PC-3 (cell line): ENCODE measurements at regions of chr7 and their contacts with region 1.

Region 1: DNA sequence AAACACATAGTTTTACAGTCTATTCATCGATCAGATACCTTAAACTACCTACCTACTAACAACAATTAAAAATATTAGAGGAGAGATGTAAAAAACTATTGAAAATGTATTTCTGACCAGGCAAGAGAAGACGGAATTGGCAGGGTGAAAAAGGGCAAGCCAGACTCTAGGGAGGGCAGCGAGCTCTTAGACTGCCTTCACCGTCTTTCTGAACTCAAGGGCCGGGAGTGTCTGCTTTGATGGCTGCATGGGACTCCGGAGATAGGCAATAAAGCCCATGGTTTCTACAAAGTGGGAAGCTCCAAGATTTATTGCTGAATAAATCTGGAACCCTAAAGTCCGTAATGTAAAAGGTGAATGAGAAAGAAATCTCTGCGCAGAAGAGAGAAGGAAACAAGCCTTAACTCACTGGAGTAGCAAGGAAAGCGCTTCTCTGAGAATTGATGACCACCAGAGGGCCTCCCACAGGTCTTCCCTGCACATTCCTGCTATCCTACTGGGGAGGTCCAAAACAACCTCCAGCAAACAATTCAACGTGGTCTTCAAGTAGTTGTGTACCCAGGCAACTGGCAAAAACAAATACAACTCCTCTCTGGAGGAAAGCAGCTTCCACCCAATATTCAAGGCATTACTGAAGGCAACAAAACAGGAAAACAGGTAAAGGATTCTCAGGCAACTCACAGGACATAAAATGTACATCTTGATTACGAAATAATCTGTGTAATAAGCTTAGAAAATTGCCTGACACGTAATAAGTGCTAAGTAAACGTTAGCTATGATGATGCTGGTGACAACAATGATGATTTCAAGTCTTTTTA is 181.3 kb downstream of the SDK1 start:
- DNase-seq: peak; percentile 53
- ATAC-seq: peak; percentile 77
- H3K4me3 ChIP-seq: no peak overlapping the region
- H3K27ac ChIP-seq: no peak overlapping the region
- H3K4me1 ChIP-seq: no peaks in the 10 kb centered on the region
- H3K27me3 ChIP-seq: no peaks in the 10 kb centered on the region
- CTCF ChIP-seq: peak; percentile 77

Region 2: GRCh38 chr7:3673524-3673923 is 191.2 kb after region 1 on chr7:
- CTCF ChIA-PET with region 1: no interaction called
- POLR2A ChIA-PET with region 1: no interaction called
- intact Hi-C with region 1: loop called (anchors 5 kb)
- DNase-seq: peak; percentile 42
- ATAC-seq: peak; percentile 35; the same call in 1 of the 2 replicates
- H3K4me3 ChIP-seq: no peak overlapping the region
- H3K27ac ChIP-seq: no peak overlapping the region
- H3K4me1 ChIP-seq: no peaks in the 10 kb centered on the region
- H3K27me3 ChIP-seq: no peaks in the 10 kb centered on the region
- CTCF ChIP-seq: peak; percentile 68